Natural killer cell (primary cell): ENCODE measurements at regions of chr3 and their contacts with region 1.

Region 1: DNA sequence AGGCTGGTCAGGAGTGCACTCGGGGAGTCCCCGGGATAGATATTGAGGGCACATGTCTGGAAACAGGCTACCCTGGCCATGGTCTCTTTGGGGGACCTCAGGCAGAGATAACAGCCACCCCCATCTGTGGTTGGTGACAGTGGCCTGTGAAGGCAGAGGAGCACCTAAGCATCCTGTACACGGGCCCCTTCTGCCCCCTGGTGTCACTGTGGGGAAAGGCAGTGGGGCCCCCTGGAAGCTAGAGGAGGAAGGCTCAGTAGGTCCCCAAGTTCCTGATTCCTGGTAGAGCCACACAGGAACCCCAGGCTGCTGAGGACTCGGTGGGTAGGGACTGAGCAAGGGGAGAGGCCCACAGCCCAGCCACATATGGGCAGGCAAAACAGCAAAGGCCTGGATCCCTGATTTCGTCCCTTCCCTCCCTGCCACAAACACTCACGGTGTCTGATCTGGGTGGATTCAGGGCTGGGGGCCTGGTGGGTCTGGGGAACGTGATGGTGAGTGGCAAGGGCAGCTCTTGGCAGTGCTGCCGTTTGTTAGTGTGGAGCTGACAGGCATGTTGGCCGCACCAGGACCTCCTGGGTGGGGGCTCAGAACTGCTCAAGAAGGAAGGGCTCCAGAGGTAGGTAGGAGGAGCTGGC is 14.1 kb upstream of the CXCR6 start:
- DNase-seq: peak; percentile 71 to 79
- ATAC-seq: peak; percentile 78 to 99 (median 99)
- H3K4me3 ChIP-seq: no peak overlapping the region
- H3K4me3 Mint-ChIP-seq: no peak overlapping the region
- H3K27ac ChIP-seq: no peak overlapping the region
- H3K27ac Mint-ChIP-seq: peak overlapping the region; percentile 46 to 89
- H3K4me1 ChIP-seq: peaks cover 7% of the 10 kb centered on the region
- H3K4me1 Mint-ChIP-seq: peaks cover 9 to 18% of the 10 kb centered on the region in 2 donors
- H3K27me3 ChIP-seq: no peaks in the 10 kb centered on the region
- H3K27me3 Mint-ChIP-seq: no peaks in the 10 kb centered on the region
- CTCF ChIP-seq: peak; percentile 85

Region 2: DNA sequence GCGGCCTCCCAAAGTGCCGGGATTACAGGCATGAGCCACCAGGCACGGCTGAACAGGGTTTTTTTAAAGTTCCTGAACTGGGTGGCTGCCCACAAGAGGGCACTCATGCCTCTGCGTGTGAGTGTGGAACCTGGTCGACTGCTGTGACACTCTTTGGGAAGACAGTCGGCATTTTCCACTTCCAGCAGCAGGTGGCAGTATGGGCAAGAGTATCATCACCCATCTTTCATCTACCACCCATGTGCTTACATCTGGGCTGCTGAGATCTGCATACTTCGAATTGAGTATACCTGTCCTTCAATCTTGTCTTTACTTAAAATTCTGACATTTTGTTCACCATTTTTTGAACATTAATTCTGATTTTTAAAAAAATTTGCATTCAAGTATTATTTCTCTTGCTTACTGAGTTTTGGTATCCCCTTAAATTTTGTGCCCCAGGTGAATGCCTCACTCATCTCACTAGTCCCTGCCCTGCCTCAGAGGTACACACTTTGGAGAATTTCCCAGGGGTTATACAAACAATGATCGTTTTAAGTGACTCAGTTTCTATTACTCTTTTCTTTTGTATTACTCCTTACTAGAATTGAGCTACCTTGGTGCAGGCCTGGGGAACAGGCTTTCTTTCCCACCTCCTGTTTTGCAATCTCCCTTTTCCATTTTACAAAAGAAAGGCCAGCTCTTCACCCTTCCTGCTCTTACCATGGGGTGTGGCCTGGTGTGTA is 891.3 kb before region 1 on chr3:
- intact Hi-C with region 1: loop called (anchors 5 kb)
- DNase-seq: peak; percentile 78 to 97
- ATAC-seq: peak; percentile 90 to 93 (median 91)
- H3K4me3 ChIP-seq: no peak overlapping the region
- H3K4me3 Mint-ChIP-seq: peak overlapping the region; percentile 70
- H3K27ac ChIP-seq: no peak overlapping the region
- H3K27ac Mint-ChIP-seq: no peak overlapping the region
- H3K4me1 ChIP-seq: peaks cover 48% of the 10 kb centered on the region
- H3K4me1 Mint-ChIP-seq: peaks cover 44 to 57% of the 10 kb centered on the region in 2 donors
- H3K27me3 ChIP-seq: peaks cover 10% of the 10 kb centered on the region
- H3K27me3 Mint-ChIP-seq: peaks cover 3 to 22% of the 10 kb centered on the region in 2 donors
- CTCF ChIP-seq: peak; percentile 90

Region 3: GRCh38 chr3:45760878-45761711 is 168.1 kb before region 1 on chr3:
- intact Hi-C with region 1: loop called (anchors 1 kb)
- DNase-seq: peak; percentile 33 to 75
- ATAC-seq: peak; percentile 71 to 88 (median 88)
- H3K4me3 ChIP-seq: no peak overlapping the region
- H3K4me3 Mint-ChIP-seq: no peak overlapping the region
- H3K27ac ChIP-seq: no peak overlapping the region
- H3K27ac Mint-ChIP-seq: no peak overlapping the region
- H3K4me1 ChIP-seq: peaks cover 8% of the 10 kb centered on the region
- H3K4me1 Mint-ChIP-seq: peaks cover 4 to 6% of the 10 kb centered on the region in 2 donors
- H3K27me3 ChIP-seq: no peaks in the 10 kb centered on the region
- H3K27me3 Mint-ChIP-seq: no peaks in the 10 kb centered on the region
- CTCF ChIP-seq: peak; percentile 68

Region 4: GRCh38 chr3:45841757-45842491 is 87.2 kb before region 1 on chr3 and contains the start of gene LZTFL1:
- intact Hi-C with region 1: loop called (anchors 1 kb)
- DNase-seq: peak; percentile 85 to 97
- ATAC-seq: peak; percentile 82 to 91 (median 86)
- H3K4me3 ChIP-seq: peak within 1 kb of the TSS; percentile 77
- H3K4me3 Mint-ChIP-seq: peak within 1 kb of the TSS; percentile 96
- H3K27ac ChIP-seq: peak within 1 kb of the TSS; percentile 81
- H3K27ac Mint-ChIP-seq: peak within 1 kb of the TSS; percentile 93 to 97
- H3K4me1 ChIP-seq: peaks cover 15% of the 10 kb centered on the region
- H3K4me1 Mint-ChIP-seq: peaks cover 22 to 38% of the 10 kb centered on the region in 2 donors
- H3K27me3 ChIP-seq: no peaks in the 10 kb centered on the region
- H3K27me3 Mint-ChIP-seq: no peaks in the 10 kb centered on the region
- CTCF ChIP-seq: peak; percentile 5
- total RNA-seq, gene LZTFL1: 16.4 to 19.8 (median 17.2) TPM

Region 5: DNA sequence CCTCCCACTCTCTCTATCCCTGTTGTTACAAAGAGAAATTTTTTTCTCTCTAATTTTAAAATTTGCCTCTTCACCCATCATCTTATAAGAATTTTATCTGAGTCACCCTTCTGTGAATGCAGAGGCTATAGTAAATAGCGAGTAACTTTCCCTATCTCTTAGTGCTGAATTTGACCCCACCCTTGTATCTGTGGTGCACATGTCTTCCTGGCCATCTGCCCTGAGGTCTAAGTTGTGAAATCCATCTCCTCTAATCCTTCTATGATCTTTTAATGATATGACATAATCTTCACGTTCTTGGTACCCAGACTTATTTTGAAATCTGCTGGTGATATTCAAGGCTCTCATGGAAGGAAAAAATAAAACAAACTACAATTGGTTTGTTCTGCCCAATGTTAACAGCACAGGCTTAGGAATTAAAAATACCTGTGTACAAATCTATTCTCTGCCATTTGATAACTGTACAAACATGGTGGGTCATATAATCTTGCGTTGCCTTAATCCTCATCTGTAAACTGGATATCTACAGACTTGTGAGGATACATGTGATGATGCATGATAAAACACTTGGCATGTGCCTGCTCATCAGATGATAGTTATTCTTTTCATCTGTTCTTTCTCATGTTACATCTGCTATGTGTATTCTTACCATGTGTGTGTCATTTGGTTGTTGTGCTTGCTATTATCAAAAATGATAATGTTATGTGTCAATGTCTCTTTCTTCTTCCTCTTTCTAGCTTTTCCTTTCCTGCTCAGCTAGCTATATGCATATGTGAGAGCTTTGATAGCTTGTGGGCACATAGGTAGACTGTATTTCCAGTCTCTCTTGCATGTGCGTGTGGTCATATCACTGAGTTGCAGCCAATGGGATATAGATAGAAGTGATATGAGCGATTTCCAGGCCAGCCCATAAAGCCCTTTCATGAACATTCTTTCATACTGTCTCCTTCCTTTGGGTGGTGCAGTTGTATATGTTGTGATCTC is 299.4 kb after region 1 on chr3:
- intact Hi-C with region 1: no loop called
- DNase-seq: peak in 1 of 2 donors; percentile 21
- ATAC-seq: peak; percentile 34 to 82 (median 63)
- H3K4me3 ChIP-seq: no peak overlapping the region
- H3K4me3 Mint-ChIP-seq: no peak overlapping the region
- H3K27ac ChIP-seq: no peak overlapping the region
- H3K27ac Mint-ChIP-seq: no peak overlapping the region
- H3K4me1 ChIP-seq: peaks cover 7% of the 10 kb centered on the region
- H3K4me1 Mint-ChIP-seq: peaks cover 15% of the 10 kb centered on the region in 2 donors
- H3K27me3 ChIP-seq: no peaks in the 10 kb centered on the region
- H3K27me3 Mint-ChIP-seq: peaks cover 4 to 8% of the 10 kb centered on the region in 2 donors
- CTCF ChIP-seq: no peak